Activated CD4-positive, alpha-beta T cell treated with anti-CD3 and anti-CD28 coated beads, Interleukin-2, amount 10 ng/mL, durations not matched to agents 7 days and 5 days (primary cell): ENCODE measurements at regions of chr1 and their contacts with region 1.

Region 1: DNA sequence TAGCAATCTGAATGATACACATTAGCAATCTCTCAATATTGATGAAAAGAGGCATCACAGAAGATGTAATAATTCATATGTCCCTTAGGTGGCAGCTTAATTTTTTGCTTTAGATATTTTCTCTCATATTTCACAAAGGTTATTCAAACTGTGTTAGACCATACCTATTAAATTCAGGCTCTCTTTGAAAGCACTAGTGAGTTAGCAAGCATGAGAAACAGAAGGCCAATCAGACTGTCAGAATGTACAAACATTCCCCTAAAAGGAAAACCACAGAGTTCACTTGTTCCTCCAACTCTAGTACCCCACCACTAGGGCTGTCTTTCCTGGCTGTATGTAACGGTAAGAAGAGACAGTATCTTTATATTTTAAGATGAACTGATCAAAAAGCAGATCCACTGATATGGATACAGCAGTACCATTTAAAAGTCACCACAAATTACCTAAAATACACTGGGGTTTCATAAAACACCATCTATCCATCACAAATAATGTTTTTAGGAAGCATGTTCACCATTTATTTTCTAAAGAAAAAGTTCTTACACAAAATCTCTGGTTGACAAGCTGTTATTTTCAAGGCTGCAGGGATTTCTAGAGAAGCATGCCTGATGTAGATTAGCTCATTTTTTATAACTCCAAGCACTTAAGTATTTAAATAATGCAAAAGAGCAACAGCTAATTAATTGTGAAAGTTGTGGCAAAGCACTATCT is 1.8 kb downstream of the ARPC5 start:
- DNase-seq: peak; percentile 52
- H3K4me3 Mint-ChIP-seq: peak overlapping the region; percentile 100
- H3K27ac Mint-ChIP-seq: peak overlapping the region; percentile 93
- H3K4me1 Mint-ChIP-seq: peaks cover 48% of the 10 kb centered on the region
- H3K27me3 Mint-ChIP-seq: peaks cover 14% of the 10 kb centered on the region

Region 2: GRCh38 chr1:183645531-183645930 is 11.7 kb after region 1 on chr1:
- CTCF ChIA-PET with region 1: interaction called, 10 read pairs
- POLR2A ChIA-PET with region 1: no interaction called
- DNase-seq: no peak
- H3K4me3 Mint-ChIP-seq: no peak overlapping the region
- H3K27ac Mint-ChIP-seq: no peak overlapping the region
- H3K4me1 Mint-ChIP-seq: no peaks in the 10 kb centered on the region
- H3K27me3 Mint-ChIP-seq: no peaks in the 10 kb centered on the region